ENCODE measurements at regions of chr6 and their contacts with region 1.

Region 1: DNA sequence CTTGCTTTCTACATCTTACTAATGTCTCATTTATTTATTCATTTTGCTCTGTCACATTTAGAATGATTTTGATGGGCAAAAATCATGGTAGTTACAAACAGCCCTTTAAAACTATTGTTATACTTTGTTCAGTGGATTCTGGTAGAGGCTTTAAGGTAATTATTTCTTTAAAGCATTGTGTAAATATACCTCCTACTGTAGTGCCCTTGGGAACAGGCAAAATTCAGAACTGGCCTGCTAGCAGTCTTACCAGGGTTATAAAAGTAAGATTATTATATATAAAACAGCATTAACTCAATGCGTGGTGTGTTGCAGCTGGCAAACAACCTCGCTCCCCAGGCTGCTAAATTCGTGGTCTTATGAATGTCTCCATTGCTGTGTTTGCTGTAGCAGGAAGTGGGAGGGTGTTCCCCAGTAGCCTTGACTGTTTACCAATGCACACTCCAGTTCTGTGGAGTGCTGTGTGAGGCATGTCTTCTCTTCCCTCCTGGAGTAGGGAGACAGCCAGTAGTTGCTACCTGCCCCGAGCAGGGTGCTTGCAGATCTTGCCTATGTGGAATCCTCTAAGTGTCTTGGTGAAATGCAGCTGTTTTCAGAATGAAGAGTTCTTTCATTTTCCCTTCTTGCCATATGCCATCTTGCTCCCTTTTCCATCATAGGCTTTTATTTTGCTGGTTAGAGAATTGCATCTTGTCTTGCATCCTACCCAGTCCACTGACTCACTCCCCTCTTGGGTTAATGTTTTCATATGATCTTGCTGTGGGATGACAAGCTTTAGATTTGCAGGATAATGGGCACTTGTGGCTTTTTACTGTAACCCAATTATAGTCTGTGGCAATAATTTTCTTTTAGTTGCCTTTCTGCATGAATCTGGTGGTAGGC is 45.3 kb downstream of the IGF2R start:
- DNase-seq: peak; percentile 54
- ATAC-seq: peak; percentile 40
- H3K4me3 Mint-ChIP-seq: peak overlapping the region; percentile 65
- H3K27ac Mint-ChIP-seq: peak overlapping the region; percentile 95
- H3K4me1 Mint-ChIP-seq: peaks cover 59% of the 10 kb centered on the region
- H3K27me3 Mint-ChIP-seq: no peaks in the 10 kb centered on the region

Region 2: DNA sequence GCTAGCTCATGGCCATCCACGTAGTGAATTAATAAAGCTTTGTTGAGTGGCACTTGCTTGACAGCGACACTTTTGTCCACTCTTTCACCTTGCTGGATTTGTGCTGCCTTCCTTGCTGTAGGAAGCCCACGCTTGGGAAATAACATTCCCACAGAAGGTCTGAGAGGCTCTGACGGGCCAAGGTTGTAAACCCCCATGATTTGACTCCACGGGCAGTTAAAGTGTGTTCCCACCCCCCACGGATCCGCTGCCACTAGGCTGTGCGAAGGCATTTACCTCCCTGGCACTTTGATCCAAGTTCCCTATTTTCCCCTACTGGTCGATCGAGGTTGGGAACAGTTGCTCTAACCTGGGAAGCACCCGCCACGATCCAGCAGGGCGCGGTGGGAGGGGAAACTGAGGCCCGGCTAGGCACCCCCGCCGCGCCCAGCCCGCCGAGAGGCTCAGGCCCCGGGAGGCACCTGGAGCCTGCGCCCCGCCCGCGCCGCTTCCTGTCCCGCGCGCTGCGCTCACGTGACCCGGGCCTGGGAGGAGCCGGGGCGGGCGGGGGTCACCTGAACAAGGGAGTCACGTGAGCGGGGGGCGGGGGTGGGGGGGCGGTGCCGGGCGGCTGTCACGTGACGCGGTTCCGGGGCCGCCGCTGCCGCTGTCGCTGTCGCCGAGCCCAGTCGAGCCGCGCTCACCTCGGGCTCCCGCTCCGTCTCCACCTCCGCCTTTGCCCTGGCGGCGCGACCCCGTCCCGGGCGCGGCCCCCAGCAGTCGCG is 45.6 kb before region 1 on chr6 and contains the start of gene IGF2R:
- CTCF ChIA-PET with region 1: interaction called, 5 read pairs
- POLR2A ChIA-PET with region 1: interaction called, 16 read pairs
- DNase-seq: peak; percentile 95
- ATAC-seq: peak; percentile 89
- H3K4me3 Mint-ChIP-seq: peak within 1 kb of the TSS; percentile 92
- H3K27ac Mint-ChIP-seq: peak within 1 kb of the TSS; percentile 94
- H3K4me1 Mint-ChIP-seq: peaks cover 41% of the 10 kb centered on the region
- H3K27me3 Mint-ChIP-seq: peaks cover 17% of the 10 kb centered on the region
- total RNA-seq, gene IGF2R: 57.4 to 59.8 TPM

Region 3: GRCh38 chr6:159979136-159979874 is 34.9 kb before region 1 on chr6:
- CTCF ChIA-PET with region 1: interaction called, 6 read pairs
- POLR2A ChIA-PET with region 1: interaction called, 12 read pairs
- DNase-seq: peak; percentile 79
- ATAC-seq: peak; percentile 74
- H3K4me3 Mint-ChIP-seq: peak overlapping the region; percentile 57
- H3K27ac Mint-ChIP-seq: peak overlapping the region; percentile 84
- H3K4me1 Mint-ChIP-seq: peaks cover 93% of the 10 kb centered on the region
- H3K27me3 Mint-ChIP-seq: no peaks in the 10 kb centered on the region

Measured in activated CD8-positive, alpha-beta T cell treated with anti-CD3 and anti-CD28 coated beads, Interleukin-2, amount 10 ng/mL, durations not matched to agents 7 days and 5 days (primary cell).